ENCODE measurements at regions of chr1 and their contacts with region 1.

Region 1: GRCh38 chr1:203861379-203862184 is at the start of gene SNRPE:
- DNase-seq: peak; percentile 80 to 97
- H3K4me3 ChIP-seq: peak within 1 kb of the TSS; percentile 90 to 97
- H3K27ac ChIP-seq: peak within 1 kb of the TSS; percentile 62 to 73
- H3K4me1 ChIP-seq: peaks cover 4 to 32% of the 10 kb centered on the region in 2 donors
- H3K27me3 ChIP-seq: no peaks in the 10 kb centered on the region
- CTCF ChIP-seq: peak; percentile 92 to 95 (median 93)
- total RNA-seq, gene SNRPE: 5.1 TPM

Region 2: DNA sequence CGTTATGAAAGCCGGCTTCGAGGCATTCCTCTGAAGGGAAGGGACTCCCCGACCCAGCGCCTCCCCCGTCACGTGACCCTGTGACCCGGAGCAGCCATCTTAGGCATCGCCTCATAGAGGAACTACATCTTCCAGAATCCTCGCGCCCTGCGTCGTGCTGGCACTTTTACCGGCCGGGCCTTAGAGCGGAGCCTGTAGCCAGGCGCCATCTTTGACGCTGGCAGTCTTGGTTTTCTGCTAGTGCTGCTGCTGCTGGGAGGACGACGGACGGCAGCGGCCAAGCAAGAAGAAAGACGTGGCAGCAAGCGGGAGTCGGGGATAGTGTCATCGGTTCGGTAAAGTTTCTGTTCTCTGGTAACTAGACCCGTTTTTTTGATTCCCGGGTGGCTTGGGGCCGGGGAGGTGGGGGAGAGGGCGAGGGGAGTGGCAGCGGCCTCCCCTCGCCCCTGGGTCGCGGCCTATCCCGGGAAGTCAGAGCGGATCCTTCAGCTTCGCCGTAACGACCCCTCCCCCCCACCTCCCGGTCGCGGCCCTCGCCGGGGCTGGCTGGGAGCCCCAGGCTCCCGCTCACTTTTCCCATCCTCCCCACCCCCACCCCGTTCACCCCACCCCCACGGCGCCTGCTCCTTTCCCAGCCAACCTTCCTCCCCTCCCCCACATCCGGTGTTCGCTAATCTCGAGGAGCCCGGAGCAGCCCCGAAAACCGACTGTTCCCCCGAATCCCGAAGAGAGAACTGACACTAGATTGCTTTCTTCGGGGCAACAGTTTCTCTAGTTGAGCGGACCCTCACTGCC is 65.9 kb before region 1 on chr1 and contains the starts of genes ZBED6 and ZC3H11A:
- intact Hi-C with region 1: loop called (anchors 5 kb)
- DNase-seq: peak; percentile 97 to 100
- H3K4me3 ChIP-seq: peak within 1 kb of the TSS; percentile 82 to 92
- H3K27ac ChIP-seq: peak within 1 kb of the TSS; percentile 96 to 98
- H3K4me1 ChIP-seq: peaks cover 9 to 38% of the 10 kb centered on the region in 2 donors
- H3K27me3 ChIP-seq: no peaks in the 10 kb centered on the region
- CTCF ChIP-seq: no peak
- total RNA-seq, gene ZBED6: 1.5 TPM
- total RNA-seq, gene ZC3H11A: 44.4 TPM

Region 3: GRCh38 chr1:204080163-204080903 is 218.8 kb after region 1 on chr1:
- intact Hi-C with region 1: loop called (anchors 2 kb)
- DNase-seq: peak; percentile 56 to 95
- H3K4me3 ChIP-seq: peak overlapping the region; percentile 7 to 24
- H3K27ac ChIP-seq: peak overlapping the region; percentile 69 to 86
- H3K4me1 ChIP-seq: peaks cover 17 to 64% of the 10 kb centered on the region in 2 donors
- H3K27me3 ChIP-seq: no peaks in the 10 kb centered on the region
- CTCF ChIP-seq: no peak

Region 4: GRCh38 chr1:204128964-204129896 is 267.6 kb after region 1 on chr1:
- intact Hi-C with region 1: loop called (anchors 1 kb)
- DNase-seq: peak in 1 of 2 donors; percentile 79
- H3K4me3 ChIP-seq: peak overlapping the region; percentile 46 to 49
- H3K27ac ChIP-seq: peak overlapping the region; percentile 25 to 58
- H3K4me1 ChIP-seq: peaks cover 0 to 23% of the 10 kb centered on the region in 2 donors
- H3K27me3 ChIP-seq: no peaks in the 10 kb centered on the region
- CTCF ChIP-seq: peak; percentile 91 to 92 (median 91)

Region 5: DNA sequence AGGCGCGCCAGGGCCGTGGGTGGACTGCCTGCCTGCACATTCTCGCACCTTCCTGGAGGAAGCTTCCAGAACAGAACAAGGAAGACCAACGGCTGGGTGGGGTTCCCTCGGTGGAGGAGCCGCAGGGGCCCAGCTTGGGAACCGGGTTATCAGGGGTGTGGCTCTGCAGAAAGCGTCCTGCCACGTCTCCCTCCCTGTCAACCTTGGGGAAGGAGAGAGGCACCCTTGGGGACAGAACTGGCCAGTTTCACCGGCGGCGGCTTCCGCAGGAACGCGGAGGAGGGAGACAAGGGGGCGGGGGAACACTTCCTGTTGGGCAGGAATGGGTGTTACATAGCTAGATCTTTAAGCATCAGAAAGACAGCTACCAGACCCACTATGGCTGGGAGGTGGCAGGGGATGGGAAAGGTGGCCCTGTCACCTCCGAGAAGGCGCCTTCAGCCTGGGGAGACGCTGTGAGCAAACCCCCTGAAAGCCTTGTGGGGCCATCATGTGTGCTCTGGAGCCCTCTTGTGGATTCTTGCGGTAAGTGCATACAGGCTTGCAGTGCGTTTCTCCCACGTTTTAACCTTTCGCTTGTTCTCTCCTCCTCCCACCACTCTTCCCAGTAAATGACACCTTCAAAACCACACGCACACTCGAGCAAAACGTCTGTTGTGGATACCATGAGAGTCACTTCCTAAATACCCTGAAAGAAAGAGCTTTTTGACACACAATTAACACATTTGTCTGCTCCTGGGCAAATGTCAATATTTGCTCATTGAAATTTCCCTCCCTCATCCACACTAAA is 501.9 kb after region 1 on chr1:
- intact Hi-C with region 1: loop called (anchors 10 kb)
- DNase-seq: peak in 1 of 2 donors; percentile 82
- H3K4me3 ChIP-seq: peak overlapping the region; percentile 48 to 64
- H3K27ac ChIP-seq: no peak overlapping the region
- H3K4me1 ChIP-seq: peaks cover 2 to 4% of the 10 kb centered on the region in 2 donors
- H3K27me3 ChIP-seq: no peaks in the 10 kb centered on the region
- CTCF ChIP-seq: peak; percentile 91 to 99 (median 95)

Region 6: DNA sequence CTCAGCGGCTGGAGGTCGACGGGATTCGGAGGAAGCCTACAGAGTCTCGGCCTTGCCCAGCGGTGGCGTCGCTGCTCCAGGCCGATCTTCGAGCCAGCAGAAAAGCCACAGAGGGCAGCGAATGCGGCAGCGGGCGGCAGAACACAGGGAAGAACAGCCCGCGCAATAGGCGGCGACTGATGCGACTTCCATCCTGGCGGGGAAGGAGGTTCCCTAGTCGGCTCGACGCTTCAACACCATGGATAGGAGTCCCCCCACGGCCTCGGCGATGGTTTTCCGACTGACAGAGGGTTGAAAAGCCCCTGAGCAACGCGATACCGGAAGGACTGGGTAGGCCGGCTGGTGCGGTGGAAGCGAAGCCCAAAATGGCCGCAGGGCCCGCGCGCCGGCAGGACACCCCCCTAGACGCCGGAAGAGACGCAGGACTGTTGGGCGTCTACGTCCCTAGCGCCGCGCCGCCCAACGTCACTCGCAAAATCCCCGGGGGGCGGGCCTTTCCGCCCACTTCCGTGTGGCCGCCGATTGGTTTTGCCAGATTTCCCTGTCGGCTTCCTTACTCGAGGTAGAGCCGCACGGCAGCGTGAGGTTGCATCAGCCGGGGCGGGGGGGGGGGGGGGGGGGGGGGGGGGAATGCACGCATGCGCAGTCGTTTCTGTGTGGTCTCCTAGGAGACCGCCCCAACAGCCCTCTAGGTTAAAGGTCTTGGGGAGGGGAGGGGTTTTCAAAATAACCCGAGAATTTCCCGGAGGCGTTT is 550.0 kb after region 1 on chr1 and contains the start of gene PPP1R15B:
- intact Hi-C with region 1: loop called (anchors 10 kb)
- DNase-seq: peak; percentile 84 to 98
- H3K4me3 ChIP-seq: peak within 1 kb of the TSS; percentile 76 to 100
- H3K27ac ChIP-seq: peak within 1 kb of the TSS; percentile 98 to 100
- H3K4me1 ChIP-seq: peaks cover 6 to 11% of the 10 kb centered on the region in 2 donors
- H3K27me3 ChIP-seq: no peaks in the 10 kb centered on the region
- CTCF ChIP-seq: no peak
- total RNA-seq, gene PPP1R15B: 36.1 TPM

Region 7: GRCh38 chr1:204516180-204516879 is 654.7 kb after region 1 on chr1 and contains the start of gene MDM4:
- intact Hi-C with region 1: loop called (anchors 5 kb)
- DNase-seq: peak; percentile 83 to 97
- H3K4me3 ChIP-seq: peak within 1 kb of the TSS; percentile 82 to 97
- H3K27ac ChIP-seq: peak within 1 kb of the TSS; percentile 90 to 92
- H3K4me1 ChIP-seq: peaks cover 7 to 16% of the 10 kb centered on the region in 2 donors
- H3K27me3 ChIP-seq: no peaks in the 10 kb centered on the region
- CTCF ChIP-seq: no peak
- total RNA-seq, gene MDM4: 9.9 TPM

Measured in ascending aorta (tissue), 2 donors.